Vagina (tissue), 2 donors: ENCODE measurements at regions of chr7 and their contacts with region 1.

Region 1: GRCh38 chr7:137985253-137985896 is 16.5 kb downstream of the CREB3L2 start:
- DNase-seq: no peak
- H3K4me3 ChIP-seq: no peak overlapping the region
- H3K27ac ChIP-seq: peak overlapping the region; percentile 57
- H3K4me1 ChIP-seq: peaks cover 84% of the 10 kb centered on the region
- H3K27me3 ChIP-seq: no peaks in the 10 kb centered on the region
- CTCF ChIP-seq: no peak
- POLR2A ChIP-seq: no peak

Region 2: GRCh38 chr7:137934941-137935883 is 50.2 kb before region 1 on chr7:
- intact Hi-C with region 1: loop called (anchors 10 kb)
- DNase-seq: no peak
- H3K4me3 ChIP-seq: no peak overlapping the region
- H3K27ac ChIP-seq: no peak overlapping the region
- H3K4me1 ChIP-seq: peaks cover 52% of the 10 kb centered on the region
- H3K27me3 ChIP-seq: no peaks in the 10 kb centered on the region
- CTCF ChIP-seq: no peak
- POLR2A ChIP-seq: no peak

Region 3: DNA sequence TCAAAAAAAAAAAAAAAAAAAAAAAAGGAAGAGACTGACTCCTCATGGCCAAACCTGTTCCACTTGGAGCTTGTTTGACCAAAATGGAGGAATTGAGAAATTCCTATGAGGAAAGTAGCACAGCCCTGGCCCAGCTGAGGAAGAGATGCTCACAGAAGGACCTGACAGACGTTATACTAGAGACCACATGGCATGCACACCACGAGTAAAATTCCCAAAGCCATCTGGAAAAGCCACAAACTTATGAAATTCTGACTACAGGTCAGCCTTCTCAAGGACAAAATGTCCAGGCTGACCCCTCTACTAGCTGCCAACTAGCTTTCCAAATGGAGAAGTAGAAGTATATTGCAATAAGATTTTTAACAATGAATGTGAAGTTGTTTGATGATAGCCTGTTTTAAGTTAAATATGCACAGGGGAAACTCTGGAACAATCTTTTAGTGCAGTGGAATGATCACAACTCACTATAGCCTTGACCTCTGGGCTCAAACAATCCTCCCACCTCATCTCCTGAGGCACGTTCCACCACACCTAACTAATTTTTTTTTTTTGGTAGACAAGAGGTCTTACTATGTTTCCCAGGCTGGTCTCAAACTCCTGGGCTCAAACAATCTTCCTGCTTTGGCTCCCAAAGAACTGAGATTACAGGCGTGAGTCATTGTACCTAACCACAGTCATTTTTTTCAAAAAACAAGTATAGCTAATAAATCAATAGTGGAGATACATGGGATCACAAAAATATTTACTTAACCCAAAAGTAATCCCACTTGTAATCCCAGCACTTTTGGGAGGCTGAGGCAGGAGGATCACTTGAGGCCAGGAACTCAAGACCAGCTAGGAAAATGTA is 166.6 kb after region 1 on chr7:
- intact Hi-C with region 1: no loop called
- DNase-seq: no peak
- H3K4me3 ChIP-seq: no peak overlapping the region
- H3K27ac ChIP-seq: no peak overlapping the region
- H3K4me1 ChIP-seq: no peaks in the 10 kb centered on the region
- H3K27me3 ChIP-seq: no peaks in the 10 kb centered on the region
- CTCF ChIP-seq: no peak
- POLR2A ChIP-seq: no peak